Dorsolateral prefrontal cortex (tissue), 120 donors: ENCODE measurements at regions of chr9 and their contacts with region 1.

Region 1: GRCh38 chr9:113275157-113276131 is at the starts of genes CDC26 and PRPF4:
- DNase-seq: peak; percentile 94 to 98 (median 97)
- H3K4me3 ChIP-seq: peak within 1 kb of the TSS; percentile 61 to 100 (median 88)
- H3K27ac ChIP-seq: peak within 1 kb of the TSS; percentile 66 to 99 (median 93)
- H3K27me3 ChIP-seq: no peaks in the 10 kb centered on the region
- CTCF ChIP-seq: peak in 29 of 56 donors; percentile 4 to 58 (median 40)
- total RNA-seq, gene CDC26: 12.2 to 29.9 (median 18.8) TPM
- total RNA-seq, gene PRPF4: 10.2 to 24.7 (median 17.8) TPM

Region 2: GRCh38 chr9:112852741-112853504 is 422.5 kb before region 1 on chr9:
- intact Hi-C with region 1: no loop called
- DNase-seq: peak in 9 of 10 donors; percentile 51 to 89 (median 77)
- H3K4me3 ChIP-seq: peak overlapping the region in 1 of 59 donors; percentile 8
- H3K27ac ChIP-seq: peak overlapping the region in 57 of 59 donors; percentile 1 to 92 (median 76)
- H3K27me3 ChIP-seq: no peaks in the 10 kb centered on the region
- CTCF ChIP-seq: peak in 51 of 56 donors; percentile 17 to 80 (median 47)

Region 3: GRCh38 chr9:113056191-113057106 is 219.0 kb before region 1 on chr9 and contains the start of gene ZFP37:
- intact Hi-C with region 1: loop called in 1 of 2 experiments (anchors 10 kb)
- DNase-seq: peak; percentile 85 to 97 (median 94)
- H3K4me3 ChIP-seq: peak within 1 kb of the TSS; percentile 47 to 96 (median 80)
- H3K27ac ChIP-seq: peak within 1 kb of the TSS in 58 of 59 donors; percentile 28 to 96 (median 82)
- H3K27me3 ChIP-seq: peaks cover 0 to 28% (median 12%) of the 10 kb centered on the region in 45 donors
- CTCF ChIP-seq: peak in 48 of 56 donors; percentile 14 to 67 (median 38)
- total RNA-seq, gene ZFP37: 4.6 to 12.8 (median 7.1) TPM

Region 4: GRCh38 chr9:113164536-113165300 is 110.7 kb before region 1 on chr9:
- intact Hi-C with region 1: loop called (anchors 5 to 10 kb)
- DNase-seq: peak; percentile 41 to 87 (median 76)
- H3K4me3 ChIP-seq: peak overlapping the region in 2 of 59 donors; percentile 2 to 20
- H3K27ac ChIP-seq: peak overlapping the region in 58 of 59 donors; percentile 11 to 99 (median 73)
- H3K27me3 ChIP-seq: no peaks in the 10 kb centered on the region
- CTCF ChIP-seq: peak in 2 of 56 donors; percentile 12 to 19

Region 5: GRCh38 chr9:113238859-113239232 is 36.6 kb before region 1 on chr9:
- intact Hi-C with region 1: no loop called
- DNase-seq: no peak
- H3K4me3 ChIP-seq: no peak overlapping the region
- H3K27ac ChIP-seq: no peak overlapping the region
- H3K27me3 ChIP-seq: no peaks in the 10 kb centered on the region
- CTCF ChIP-seq: no peak

Region 6: DNA sequence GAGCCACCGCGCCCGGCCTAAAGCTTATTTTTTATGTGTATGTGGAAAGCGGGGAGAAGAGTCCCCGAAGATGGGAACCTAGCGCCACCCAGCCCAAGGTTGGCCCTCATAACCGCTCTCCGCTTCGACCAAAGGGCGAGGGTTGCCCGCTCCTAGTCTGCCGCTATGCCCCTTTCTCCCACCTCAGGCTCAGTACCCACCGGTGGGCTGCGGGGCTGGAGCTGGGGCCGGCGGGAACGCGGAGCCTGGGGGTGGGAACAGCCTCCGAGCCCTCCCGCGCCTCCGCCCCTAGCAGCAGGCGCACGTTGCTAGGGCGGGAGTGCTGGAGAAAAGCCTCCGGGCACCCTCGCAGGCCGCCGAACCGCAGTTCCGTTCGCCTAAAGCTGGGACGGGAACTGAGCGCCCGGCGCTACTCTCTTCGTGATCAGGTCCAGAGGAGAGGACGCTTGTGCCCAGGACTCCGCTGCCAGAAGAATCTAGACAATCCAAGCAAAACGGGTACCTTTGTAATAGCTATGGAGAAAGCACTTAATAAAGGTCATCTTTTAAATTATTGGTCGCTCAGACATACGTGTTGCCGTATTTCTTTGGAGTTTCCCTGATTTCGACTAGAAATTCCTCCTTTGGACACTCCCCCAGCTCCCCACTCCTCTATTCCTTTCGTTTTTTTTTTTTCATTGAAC is 64.7 kb after region 1 on chr9 and contains the start of gene WDR31:
- intact Hi-C with region 1: loop called in 1 of 2 experiments (anchors 2 kb)
- DNase-seq: peak; percentile 80 to 93 (median 88)
- H3K4me3 ChIP-seq: peak within 1 kb of the TSS; percentile 58 to 93 (median 79)
- H3K27ac ChIP-seq: peak within 1 kb of the TSS in 58 of 59 donors; percentile 27 to 93 (median 80)
- H3K27me3 ChIP-seq: no peaks in the 10 kb centered on the region
- CTCF ChIP-seq: peak in 48 of 56 donors; percentile 9 to 66 (median 38)
- total RNA-seq, gene WDR31: 2.7 to 12.3 (median 7.0) TPM

Region 7: GRCh38 chr9:113410207-113410864 is 134.9 kb after region 1 on chr9 and contains the starts of genes C9orf43 and POLE3:
- intact Hi-C with region 1: loop called (anchors 1 kb)
- DNase-seq: peak; percentile 91 to 94 (median 92)
- H3K4me3 ChIP-seq: peak within 1 kb of the TSS; percentile 61 to 100 (median 91)
- H3K27ac ChIP-seq: peak within 1 kb of the TSS; percentile 92 to 100 (median 99)
- H3K27me3 ChIP-seq: no peaks in the 10 kb centered on the region
- CTCF ChIP-seq: peak in 31 of 56 donors; percentile 2 to 61 (median 20)
- total RNA-seq, gene C9orf43: 0.41 to 2.5 (median 1.2) TPM
- total RNA-seq, gene POLE3: 18.6 to 38.2 (median 27.0) TPM

Region 8: DNA sequence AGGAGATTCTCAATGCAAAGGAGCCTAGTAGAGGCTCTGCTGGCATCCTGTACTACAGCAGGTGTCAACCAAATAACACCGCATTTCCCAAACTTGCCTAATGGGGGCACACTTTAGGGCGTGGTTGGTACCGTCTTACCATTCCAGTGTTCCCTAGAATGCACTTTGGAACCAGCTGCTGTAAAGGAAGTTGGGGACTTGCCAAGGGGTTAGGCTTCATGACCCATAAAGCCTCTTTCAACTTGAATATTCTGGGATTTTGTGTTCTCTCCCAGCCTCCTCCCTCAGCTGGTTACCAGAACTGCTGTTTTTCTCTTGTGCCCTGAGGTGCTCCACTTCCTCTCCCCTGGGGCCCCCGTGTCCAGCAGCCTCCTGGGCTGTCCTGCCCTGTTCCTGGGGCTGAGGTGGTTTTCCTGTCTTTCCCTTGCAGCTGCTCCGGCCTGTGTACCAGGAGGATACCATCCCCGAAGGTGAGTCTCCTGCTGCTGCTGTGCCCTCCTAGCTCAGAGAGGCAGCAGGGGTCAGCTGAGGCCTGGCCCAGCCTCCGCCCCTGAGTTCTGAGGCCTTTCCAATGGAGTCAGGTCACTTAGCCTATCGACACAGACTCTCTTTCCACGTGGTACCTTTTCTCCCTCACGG is 232.8 kb after region 1 on chr9:
- intact Hi-C with region 1: no loop called
- DNase-seq: no peak
- H3K4me3 ChIP-seq: no peak overlapping the region
- H3K27ac ChIP-seq: no peak overlapping the region
- H3K27me3 ChIP-seq: no peaks in the 10 kb centered on the region
- CTCF ChIP-seq: peak in 1 of 56 donors; percentile 5

Region 9: GRCh38 chr9:113657703-113658544 is 382.5 kb after region 1 on chr9:
- intact Hi-C with region 1: loop called (anchors 5 kb)
- DNase-seq: peak; percentile 79 to 89 (median 86)
- H3K4me3 ChIP-seq: no peak overlapping the region
- H3K27ac ChIP-seq: no peak overlapping the region
- H3K27me3 ChIP-seq: peaks cover 0 to 15% (median 0%) of the 10 kb centered on the region in 45 donors
- CTCF ChIP-seq: peak; percentile 82 to 99 (median 97)